ENCODE measurements at regions of chr15 and their contacts with region 1.

Region 1: DNA sequence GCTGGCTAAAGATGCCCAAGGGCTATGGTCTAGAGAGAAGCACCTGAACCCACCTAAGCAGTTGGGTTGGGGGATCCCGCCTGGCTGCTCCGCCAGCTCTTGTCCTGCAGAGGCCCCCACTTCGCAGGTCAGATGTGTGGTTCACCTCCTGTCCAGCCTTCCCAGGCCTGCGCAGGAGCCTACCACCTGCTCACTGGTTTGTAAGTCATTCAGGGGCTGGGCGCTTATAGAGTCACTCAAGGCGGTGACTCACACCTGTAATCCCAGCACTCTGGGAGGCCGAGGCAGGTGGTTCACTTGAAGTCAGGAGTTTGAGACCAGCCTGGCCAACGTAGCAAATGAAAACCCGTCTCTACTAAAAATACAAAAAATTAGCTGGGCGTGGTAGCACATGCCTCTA is 3.9 kb upstream of the FURIN start:
- H3K4me3 ChIP-seq: no peak overlapping the region
- H3K27ac ChIP-seq: no peak overlapping the region
- H3K4me1 ChIP-seq: peaks cover 37% of the 10 kb centered on the region
- CTCF ChIP-seq: no peak

Region 2: GRCh38 chr15:90774731-90775484 is 89.6 kb before region 1 on chr15:
- CTCF ChIA-PET with region 1: no interaction called
- POLR2A ChIA-PET with region 1: interaction called, 13 read pairs
- H3K4me3 ChIP-seq: no peak overlapping the region
- H3K27ac ChIP-seq: no peak overlapping the region
- H3K4me1 ChIP-seq: no peaks in the 10 kb centered on the region
- CTCF ChIP-seq: no peak

Measured in HEK293 (cell line).